ENCODE measurements at regions of chrX and their contacts with region 1.

Region 1: DNA sequence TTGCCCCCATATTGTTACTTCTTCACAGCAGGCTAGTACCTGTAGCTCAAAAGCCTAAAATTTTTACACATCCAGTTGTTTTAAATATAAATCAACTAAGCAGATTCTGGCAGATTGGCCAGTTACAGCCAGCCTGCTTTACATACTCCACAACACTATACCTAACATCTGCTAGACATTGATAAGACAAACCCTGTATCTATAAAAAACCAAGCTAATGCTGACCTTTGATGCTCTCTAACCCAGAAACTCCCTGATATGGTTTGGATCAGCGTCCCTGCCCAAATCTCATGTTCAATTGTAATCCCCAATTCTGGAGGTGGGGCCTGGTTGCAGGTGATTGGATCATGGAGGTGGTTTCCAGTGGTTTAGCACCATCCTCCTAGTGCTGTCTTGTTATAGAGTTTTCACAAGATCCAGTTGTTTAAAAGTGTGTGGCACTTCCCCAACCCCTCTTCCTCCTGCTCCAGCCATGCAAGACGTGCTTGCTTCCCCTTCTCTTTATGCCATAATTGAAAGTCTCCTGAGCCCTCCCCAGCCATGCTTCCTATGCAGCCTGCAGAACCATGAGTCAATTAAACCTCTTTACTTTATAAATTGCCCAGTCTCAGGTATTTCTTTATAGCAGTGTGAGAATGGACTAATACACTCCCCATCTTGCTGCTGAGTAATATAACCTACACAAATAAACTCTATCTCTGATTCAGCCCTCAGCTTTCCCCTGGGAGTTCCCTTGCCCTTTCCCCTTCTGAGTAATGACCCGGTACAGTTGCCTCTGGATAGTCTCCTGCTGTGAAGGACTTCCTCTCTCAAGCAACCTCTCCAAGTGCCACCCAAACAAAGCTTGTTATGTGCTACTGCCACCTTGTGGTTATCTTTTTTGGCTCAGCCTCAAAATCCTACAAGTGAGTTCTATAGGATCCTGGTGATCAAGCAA is 39.6 kb downstream of the ZCCHC13 start:
- DNase-seq: no peak

Region 2: DNA sequence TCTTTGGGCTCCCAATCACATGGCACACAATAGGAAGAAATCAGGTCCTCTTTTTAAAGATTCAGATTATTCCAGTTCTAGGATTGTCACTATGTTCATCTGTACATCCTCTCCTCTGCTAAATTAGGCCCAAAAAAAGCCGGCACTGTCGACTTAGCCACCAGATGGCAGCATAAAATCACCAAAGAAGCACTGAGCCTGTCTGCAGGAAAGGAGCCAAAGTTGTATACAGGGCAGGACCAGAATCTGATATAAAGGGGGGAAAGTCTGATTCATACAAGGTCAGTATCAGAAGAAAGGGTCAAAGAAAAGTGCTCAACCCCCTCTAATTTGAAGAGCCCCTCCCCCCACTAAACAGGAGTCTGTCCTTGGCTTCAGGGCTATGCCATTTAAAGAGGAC is 488.1 kb before region 1 on chrX:
- intact Hi-C with region 1: loop called (anchors 5 kb)
- DNase-seq: no peak

Region 3: GRCh38 chrX:74133156-74133796 is 210.3 kb before region 1 on chrX:
- intact Hi-C with region 1: loop called (anchors 2 kb)
- DNase-seq: no peak

Region 4: GRCh38 chrX:74291964-74292807 is 51.4 kb before region 1 on chrX:
- intact Hi-C with region 1: loop called (anchors 10 kb)
- DNase-seq: peak; percentile 92